H1 (cell line): ENCODE measurements at regions of chr17 and their contacts with region 1.

Region 1: DNA sequence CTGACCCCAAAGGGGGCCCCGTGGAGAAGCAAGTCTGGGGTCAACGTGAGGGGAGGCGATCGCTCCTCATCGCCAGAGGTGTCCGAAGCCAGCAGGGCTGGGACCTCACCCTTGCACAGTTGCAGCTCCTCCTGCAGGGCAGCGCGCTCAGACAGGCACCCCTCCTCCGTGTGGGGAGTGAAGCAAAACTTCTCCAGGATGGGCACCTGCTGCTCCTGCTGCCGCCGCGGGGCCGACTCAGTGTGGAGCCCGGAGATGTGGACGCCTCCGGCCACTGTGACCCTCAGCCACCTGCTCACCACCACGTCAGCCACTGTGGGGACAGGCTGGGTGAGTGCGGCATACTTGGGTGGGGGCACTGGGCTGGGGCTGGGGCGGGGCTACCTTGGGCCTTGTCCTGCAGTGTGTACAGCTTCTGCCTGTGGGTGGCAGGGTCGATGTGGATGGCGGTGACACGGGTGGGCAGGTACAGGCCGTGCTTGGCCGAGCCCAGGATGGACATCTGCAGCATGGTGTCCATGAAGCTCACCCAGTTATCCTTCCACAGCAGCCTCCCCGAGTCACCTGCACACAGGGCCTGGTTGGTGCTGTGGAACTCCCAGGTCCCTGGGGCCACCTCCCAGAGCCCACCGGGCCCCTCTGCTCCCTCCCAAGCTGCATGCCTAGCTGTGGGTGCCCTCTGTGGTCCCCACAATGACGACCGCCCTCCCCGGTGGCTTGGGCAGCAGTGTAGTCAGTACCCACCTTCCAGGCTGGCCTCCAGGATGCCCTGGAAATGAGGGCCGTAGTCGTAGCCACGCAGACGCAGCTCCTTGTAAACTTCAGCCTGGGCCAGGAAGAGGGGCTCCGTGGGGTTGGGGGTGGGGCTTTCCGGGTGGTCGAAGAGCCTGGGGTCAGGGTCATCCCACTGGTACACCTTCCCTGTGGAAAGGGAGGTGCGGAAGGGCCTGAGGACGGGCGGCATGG is 10.8 kb downstream of the FASN start:
- DNase-seq: no peak
- H3K4me3 ChIP-seq: no peak overlapping the region
- H3K27ac ChIP-seq: no peak overlapping the region
- H3K4me1 ChIP-seq: no peaks in the 10 kb centered on the region
- H3K27me3 ChIP-seq: no peaks in the 10 kb centered on the region
- CTCF ChIP-seq: no peak
- EP300 ChIP-seq: no peak
- POLR2A ChIP-seq: no peak
- RAD21 ChIP-seq: no peak

Region 2: GRCh38 chr17:81902023-81902652 is 185.1 kb before region 1 on chr17 and contains the start of gene NPB:
- CTCF ChIA-PET with region 1: no interaction called
- POLR2A ChIA-PET with region 1: no interaction called
- DNase-seq: peak in 1 of 2 experiments; percentile 75
- H3K4me3 ChIP-seq: peak within 1 kb of the TSS; percentile 19 to 61 (median 44)
- H3K27ac ChIP-seq: no peak within 1 kb of the TSS
- H3K4me1 ChIP-seq: peaks cover 0 to 8% (median 2%) of the 10 kb centered on the region in 4 experiments; a peak in 3 of 7 replicates
- H3K27me3 ChIP-seq: peaks cover 0 to 22% (median 14%) of the 10 kb centered on the region in 4 experiments; a peak in 5 of 7 replicates
- CTCF ChIP-seq: no peak
- EP300 ChIP-seq: no peak
- POLR2A ChIP-seq: 0 out of 3 replicates have a peak, but pooled peaks of 1 of the 2 experiments have one; percentile 26
- RAD21 ChIP-seq: no peak
- total RNA-seq, gene NPB: 0.80 and 1.5 TPM in 2 replicates

Region 3: GRCh38 chr17:82051776-82052637 is 35.2 kb before region 1 on chr17 and contains the starts of genes GPS1 and RFNG:
- CTCF ChIA-PET with region 1: no interaction called
- POLR2A ChIA-PET with region 1: interaction called, 26 read pairs
- DNase-seq: peak in 1 of 2 experiments; percentile 86
- H3K4me3 ChIP-seq: peak within 1 kb of the TSS; percentile 72 to 94 (median 86)
- H3K27ac ChIP-seq: no peak within 1 kb of the TSS
- H3K4me1 ChIP-seq: peaks cover 0 to 11% (median 6%) of the 10 kb centered on the region in 4 experiments; a peak in 5 of 7 replicates
- H3K27me3 ChIP-seq: no peaks in the 10 kb centered on the region; a peak in 1 of 7 replicates
- CTCF ChIP-seq: no peak
- EP300 ChIP-seq: no peak
- POLR2A ChIP-seq: no peak; a peak in 1 of 3 replicates
- RAD21 ChIP-seq: no peak
- total RNA-seq, gene GPS1: 153 and 157 TPM in 2 replicates
- total RNA-seq, gene RFNG: 26.7 and 30.9 TPM in 2 replicates

Region 4: DNA sequence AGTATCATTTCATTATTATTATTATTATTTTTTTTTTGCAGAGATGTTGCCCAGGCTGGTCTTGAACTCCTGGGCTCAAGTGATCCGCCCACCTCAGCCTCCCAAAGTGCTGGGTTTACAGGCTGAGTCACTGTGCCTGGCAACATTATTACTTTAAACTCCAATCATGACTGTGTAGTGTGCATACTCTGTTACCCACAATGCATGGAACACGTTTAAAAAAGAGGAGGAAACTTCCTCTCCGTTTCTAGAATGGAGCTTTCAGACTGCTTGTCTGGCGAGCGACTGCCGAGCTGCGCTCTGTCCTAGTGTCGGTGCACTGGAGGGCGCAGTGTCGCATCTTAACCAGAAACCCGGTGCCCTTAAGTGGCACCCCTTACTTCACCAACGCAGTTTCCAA is 32.9 kb after region 1 on chr17:
- CTCF ChIA-PET with region 1: no interaction called
- POLR2A ChIA-PET with region 1: no interaction called
- DNase-seq: no peak
- H3K4me3 ChIP-seq: no peak overlapping the region
- H3K27ac ChIP-seq: no peak overlapping the region
- H3K4me1 ChIP-seq: peaks cover 0 to 8% (median 2%) of the 10 kb centered on the region in 4 experiments; a peak in 4 of 7 replicates
- H3K27me3 ChIP-seq: no peaks in the 10 kb centered on the region
- CTCF ChIP-seq: no peak
- EP300 ChIP-seq: no peak
- POLR2A ChIP-seq: no peak
- RAD21 ChIP-seq: no peak